WTC11 (cell line): ENCODE measurements at regions of chr4 and their contacts with region 1.

Region 1: DNA sequence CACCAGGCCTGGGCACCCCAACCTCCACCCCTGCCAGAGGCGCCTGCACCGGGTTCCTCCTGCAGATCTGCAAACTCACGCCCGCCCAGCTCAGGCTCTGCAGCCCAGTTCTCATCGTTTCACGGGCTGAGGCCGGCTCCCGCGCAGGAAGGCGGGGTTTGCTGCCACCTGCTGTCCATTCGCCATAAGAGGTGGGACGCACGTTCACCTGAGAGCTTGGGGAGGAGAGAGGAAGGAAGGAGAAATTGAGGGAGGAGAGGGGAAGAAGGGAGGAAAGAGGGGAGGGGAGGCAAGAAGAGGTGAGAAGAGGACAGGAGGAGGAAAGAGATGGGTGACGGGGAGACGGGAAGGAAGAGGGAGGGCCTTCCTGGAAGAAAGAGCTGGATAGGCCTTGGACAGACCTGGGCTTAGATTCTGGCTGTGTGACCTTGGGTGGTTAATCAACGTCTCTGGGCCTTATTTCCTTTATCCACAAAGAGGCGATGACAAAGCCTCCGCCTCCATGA is 114.5 kb downstream of the ADRA2C start:
- DNase-seq: peak; percentile 93
- ATAC-seq: peak; percentile 93
- H3K4me3 Mint-ChIP-seq: peak overlapping the region; percentile 45
- H3K27ac Mint-ChIP-seq: no peak overlapping the region
- H3K4me1 Mint-ChIP-seq: peaks cover 16% of the 10 kb centered on the region
- H3K27me3 Mint-ChIP-seq: peaks cover 34% of the 10 kb centered on the region
- CTCF ChIP-seq: peak; percentile 57

Region 2: GRCh38 chr4:3480528-3481112 is 400.0 kb before region 1 on chr4:
- CTCF ChIA-PET with region 1: interaction called, 18 read pairs
- POLR2A ChIA-PET with region 1: no interaction called
- DNase-seq: peak; percentile 95
- ATAC-seq: peak; percentile 85
- H3K4me3 Mint-ChIP-seq: peak overlapping the region; percentile 53
- H3K27ac Mint-ChIP-seq: no peak overlapping the region
- H3K4me1 Mint-ChIP-seq: peaks cover 18% of the 10 kb centered on the region
- H3K27me3 Mint-ChIP-seq: peaks cover 68% of the 10 kb centered on the region
- CTCF ChIP-seq: peak; percentile 99

Region 3: DNA sequence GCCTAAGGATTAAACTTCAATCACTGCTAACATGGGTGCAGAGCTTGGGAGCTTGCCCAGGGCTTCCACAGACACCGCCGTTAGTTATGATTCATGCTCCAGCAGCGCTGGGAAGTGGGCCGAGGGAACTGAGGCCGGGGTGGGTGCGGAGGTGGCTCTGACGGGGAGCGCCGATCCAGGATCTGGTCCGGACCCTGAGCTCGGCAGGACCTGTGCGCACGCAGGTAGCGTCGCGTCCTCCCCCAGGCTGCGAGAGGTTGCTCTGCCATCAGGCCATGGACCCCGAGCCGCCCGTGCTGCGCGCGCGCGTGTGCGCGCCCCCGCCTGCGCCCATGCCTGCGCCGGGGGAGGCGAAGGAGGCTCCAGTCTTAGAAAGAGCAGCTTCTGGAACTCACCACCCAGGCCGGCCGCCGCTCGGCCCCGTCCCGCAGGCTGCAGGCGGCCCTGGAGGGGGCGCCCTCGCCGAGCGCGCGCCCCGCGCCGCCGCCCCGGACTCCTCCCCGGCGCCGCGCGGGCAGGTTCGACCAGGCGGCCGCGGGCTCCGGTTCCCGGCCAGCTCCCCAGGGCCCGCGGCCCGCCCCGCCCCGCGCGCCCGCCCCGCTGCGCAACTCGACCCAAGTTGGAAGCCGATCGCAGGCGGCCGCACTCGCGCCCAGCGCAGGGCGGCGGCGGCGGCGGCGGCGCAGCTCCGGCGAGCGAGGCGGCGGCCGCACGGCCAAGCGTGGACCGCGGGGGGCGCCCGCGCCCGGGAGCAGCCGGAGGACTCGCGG is 115.2 kb before region 1 on chr4:
- CTCF ChIA-PET with region 1: interaction called, 96 read pairs
- POLR2A ChIA-PET with region 1: no interaction called
- DNase-seq: peak; percentile 70
- ATAC-seq: peak; percentile 71
- H3K4me3 Mint-ChIP-seq: peak overlapping the region; percentile 47
- H3K27ac Mint-ChIP-seq: no peak overlapping the region
- H3K4me1 Mint-ChIP-seq: peaks cover 8% of the 10 kb centered on the region
- H3K27me3 Mint-ChIP-seq: peaks cover 37% of the 10 kb centered on the region
- CTCF ChIP-seq: no peak

Region 4: GRCh38 chr4:3801931-3802550 is 78.6 kb before region 1 on chr4:
- CTCF ChIA-PET with region 1: interaction called, 21 read pairs
- POLR2A ChIA-PET with region 1: no interaction called
- DNase-seq: no peak
- ATAC-seq: no peak
- H3K4me3 Mint-ChIP-seq: no peak overlapping the region
- H3K27ac Mint-ChIP-seq: no peak overlapping the region
- H3K4me1 Mint-ChIP-seq: peaks cover 29% of the 10 kb centered on the region
- H3K27me3 Mint-ChIP-seq: no peaks in the 10 kb centered on the region
- CTCF ChIP-seq: no peak

Region 5: GRCh38 chr4:3827616-3828492 is 52.8 kb before region 1 on chr4:
- CTCF ChIA-PET with region 1: interaction called, 20 read pairs
- POLR2A ChIA-PET with region 1: no interaction called
- DNase-seq: no peak
- ATAC-seq: no peak
- H3K4me3 Mint-ChIP-seq: no peak overlapping the region
- H3K27ac Mint-ChIP-seq: no peak overlapping the region
- H3K4me1 Mint-ChIP-seq: peaks cover 23% of the 10 kb centered on the region
- H3K27me3 Mint-ChIP-seq: no peaks in the 10 kb centered on the region; the same call in 1 of the 2 replicates
- CTCF ChIP-seq: no peak

Region 6: GRCh38 chr4:3857269-3857926 is 23.3 kb before region 1 on chr4:
- CTCF ChIA-PET with region 1: interaction called, 24 read pairs
- POLR2A ChIA-PET with region 1: interaction called, 6 read pairs
- DNase-seq: no peak
- ATAC-seq: no peak
- H3K4me3 Mint-ChIP-seq: no peak overlapping the region
- H3K27ac Mint-ChIP-seq: no peak overlapping the region
- H3K4me1 Mint-ChIP-seq: peaks cover 38% of the 10 kb centered on the region
- H3K27me3 Mint-ChIP-seq: peaks cover 5% of the 10 kb centered on the region
- CTCF ChIP-seq: no peak

Region 7: GRCh38 chr4:4289941-4290850 is 409.5 kb after region 1 on chr4 and contains the starts of genes LYAR and ZBTB49:
- CTCF ChIA-PET with region 1: no interaction called
- POLR2A ChIA-PET with region 1: no interaction called
- DNase-seq: peak; percentile 98
- ATAC-seq: peak; percentile 91
- H3K4me3 Mint-ChIP-seq: peak within 1 kb of the TSS; percentile 94
- H3K27ac Mint-ChIP-seq: peak within 1 kb of the TSS; percentile 72; the same call in 1 of the 2 replicates
- H3K4me1 Mint-ChIP-seq: peaks cover 23% of the 10 kb centered on the region
- H3K27me3 Mint-ChIP-seq: no peaks in the 10 kb centered on the region
- CTCF ChIP-seq: no peak
- total RNA-seq, gene LYAR: 32.1 to 36.8 TPM (median 34.1 TPM) in 3 replicates
- total RNA-seq, gene ZBTB49: 4.4 to 7.4 TPM (median 5.6 TPM) in 3 replicates